PC-9 (cell line): ENCODE measurements at regions of chr10 and their contacts with region 1.

Region 1: GRCh38 chr10:117216611-117217195 is 19.4 kb downstream of the KCNK18 start:
- DNase-seq: peak in 1 of 2 experiments; percentile 40
- H3K4me3 ChIP-seq: peak overlapping the region; percentile 26; the same call in 1 of the 2 replicates
- H3K27ac ChIP-seq: no peak overlapping the region
- H3K4me1 ChIP-seq: peaks cover 7% of the 10 kb centered on the region; the same call in 1 of the 2 replicates
- H3K27me3 ChIP-seq: no peaks in the 10 kb centered on the region
- CTCF ChIP-seq: peak; percentile 90

Region 2: GRCh38 chr10:117186832-117187615 is 29.7 kb before region 1 on chr10:
- CTCF ChIA-PET with region 1: no interaction called
- POLR2A ChIA-PET with region 1: no interaction called
- intact Hi-C with region 1: no loop called
- DNase-seq: peak in 1 of 2 experiments; percentile 79
- H3K4me3 ChIP-seq: peak overlapping the region; percentile 19; the same call in 1 of the 2 replicates
- H3K27ac ChIP-seq: peak overlapping the region; percentile 83
- H3K4me1 ChIP-seq: peaks cover 27% of the 10 kb centered on the region
- H3K27me3 ChIP-seq: no peaks in the 10 kb centered on the region
- CTCF ChIP-seq: no peak

Region 3: DNA sequence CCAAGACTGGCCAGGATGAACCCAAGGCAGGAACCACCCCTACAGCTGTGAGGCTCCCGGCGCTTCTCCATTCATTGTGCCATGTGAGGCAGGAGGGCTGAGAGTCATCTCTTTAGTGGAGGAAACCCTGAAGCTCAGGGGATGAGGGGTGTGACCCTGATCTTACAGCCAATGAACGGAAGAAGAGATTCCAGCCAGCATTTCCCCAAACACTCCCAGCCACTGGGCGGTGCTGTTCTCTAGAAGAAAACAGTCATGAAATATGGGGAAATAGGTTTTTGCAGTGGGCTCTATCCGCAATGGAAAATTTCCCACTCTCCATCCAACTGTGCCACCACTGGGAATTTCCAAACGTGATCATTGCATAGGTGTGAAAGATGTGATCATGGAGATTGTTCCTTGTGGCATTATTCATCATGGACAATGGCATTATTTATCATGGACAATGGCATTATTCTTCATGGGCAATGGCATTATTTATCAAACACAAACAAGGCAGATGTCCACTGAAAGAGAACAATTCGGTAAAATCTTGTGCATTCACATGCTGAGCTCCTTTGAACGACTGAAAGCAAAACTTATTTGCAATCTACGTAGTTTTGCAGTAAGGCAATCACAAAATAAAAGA is 10.2 kb after region 1 on chr10:
- CTCF ChIA-PET with region 1: no interaction called
- POLR2A ChIA-PET with region 1: no interaction called
- intact Hi-C with region 1: no loop called
- DNase-seq: no peak
- H3K4me3 ChIP-seq: no peak overlapping the region
- H3K27ac ChIP-seq: no peak overlapping the region
- H3K4me1 ChIP-seq: no peaks in the 10 kb centered on the region
- H3K27me3 ChIP-seq: peaks cover 27% of the 10 kb centered on the region
- CTCF ChIP-seq: peak; percentile 37

Region 4: GRCh38 chr10:117320050-117320665 is 103.5 kb after region 1 on chr10:
- CTCF ChIA-PET with region 1: interaction called, 5 read pairs
- POLR2A ChIA-PET with region 1: no interaction called
- intact Hi-C with region 1: loop called (anchors 1 kb)
- DNase-seq: no peak
- H3K4me3 ChIP-seq: no peak overlapping the region
- H3K27ac ChIP-seq: no peak overlapping the region
- H3K4me1 ChIP-seq: no peaks in the 10 kb centered on the region
- H3K27me3 ChIP-seq: no peaks in the 10 kb centered on the region
- CTCF ChIP-seq: peak; percentile 70

Region 5: DNA sequence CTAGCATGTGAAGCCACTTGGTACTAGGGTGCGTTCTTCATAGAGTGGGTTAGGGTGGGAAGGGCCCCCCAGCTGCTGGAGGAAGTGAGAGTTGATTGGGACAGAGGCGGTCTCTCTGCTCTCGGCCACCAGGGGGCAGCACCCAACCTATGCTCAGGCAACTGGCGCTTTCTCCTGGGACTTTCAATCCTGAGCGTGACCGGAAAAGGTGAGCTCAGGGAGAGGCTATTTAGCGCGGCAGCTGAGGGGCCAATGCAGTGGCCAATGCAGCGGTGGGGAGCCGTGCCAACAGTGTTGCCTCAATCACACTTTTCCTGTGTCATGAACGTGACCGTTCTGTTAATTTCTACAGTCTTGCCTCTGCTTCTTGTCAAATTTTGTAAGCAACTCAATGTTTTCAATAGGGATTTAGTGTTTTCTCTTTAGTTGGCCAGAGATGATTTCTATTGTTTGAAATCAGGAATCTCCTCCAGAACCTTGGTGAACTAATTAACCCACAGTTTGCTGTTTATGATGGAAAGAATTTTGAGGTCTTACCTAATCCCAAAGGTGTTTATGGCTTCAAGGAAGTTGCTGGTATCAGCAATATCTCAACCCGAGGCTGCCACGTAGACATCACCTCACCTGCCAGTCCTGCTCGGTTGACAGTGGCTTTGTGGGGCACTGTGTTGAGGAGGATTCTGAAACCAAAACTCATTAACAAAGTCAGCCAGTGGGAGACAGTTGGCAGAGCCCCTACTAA is 226.4 kb after region 1 on chr10:
- CTCF ChIA-PET with region 1: no interaction called
- POLR2A ChIA-PET with region 1: no interaction called
- intact Hi-C with region 1: loop called (anchors 5 kb)
- DNase-seq: peak; percentile 52 to 59
- H3K4me3 ChIP-seq: peak overlapping the region; percentile 34; the same call in 1 of the 2 replicates
- H3K27ac ChIP-seq: peak overlapping the region; percentile 58
- H3K4me1 ChIP-seq: peaks cover 23% of the 10 kb centered on the region
- H3K27me3 ChIP-seq: no peaks in the 10 kb centered on the region
- CTCF ChIP-seq: peak; percentile 85